ENCODE measurements at regions of chr4 and their contacts with region 1.

Region 1: GRCh38 chr4:112231779-112232713 is at the start of gene AP1AR:
- DNase-seq: peak; percentile 87
- ATAC-seq: peak; percentile 60
- H3K4me3 Mint-ChIP-seq: peak within 1 kb of the TSS; percentile 79
- H3K27ac Mint-ChIP-seq: peak within 1 kb of the TSS; percentile 91
- H3K4me1 Mint-ChIP-seq: peaks cover 28% of the 10 kb centered on the region
- H3K27me3 Mint-ChIP-seq: no peaks in the 10 kb centered on the region
- total RNA-seq, gene AP1AR: 15.8 to 16.5 TPM

Region 2: GRCh38 chr4:112099701-112100297 is 132.2 kb before region 1 on chr4:
- CTCF ChIA-PET with region 1: interaction called, 31 read pairs
- POLR2A ChIA-PET with region 1: no interaction called
- intact Hi-C with region 1: loop called (anchors 1 kb)
- DNase-seq: no peak
- ATAC-seq: peak; percentile 80
- H3K4me3 Mint-ChIP-seq: no peak overlapping the region
- H3K27ac Mint-ChIP-seq: no peak overlapping the region
- H3K4me1 Mint-ChIP-seq: no peaks in the 10 kb centered on the region
- H3K27me3 Mint-ChIP-seq: peaks cover 12% of the 10 kb centered on the region

Region 3: GRCh38 chr4:112145326-112145819 is 86.7 kb before region 1 on chr4 and contains the start of gene FAM241A:
- CTCF ChIA-PET with region 1: interaction called, 4 read pairs
- POLR2A ChIA-PET with region 1: interaction called, 5 read pairs
- intact Hi-C with region 1: loop called (anchors 1 kb)
- DNase-seq: peak; percentile 94
- ATAC-seq: peak; percentile 94
- H3K4me3 Mint-ChIP-seq: peak within 1 kb of the TSS; percentile 90
- H3K27ac Mint-ChIP-seq: peak within 1 kb of the TSS; percentile 90
- H3K4me1 Mint-ChIP-seq: peaks cover 39% of the 10 kb centered on the region
- H3K27me3 Mint-ChIP-seq: no peaks in the 10 kb centered on the region
- total RNA-seq, gene FAM241A: 3.2 to 3.5 TPM

Region 4: DNA sequence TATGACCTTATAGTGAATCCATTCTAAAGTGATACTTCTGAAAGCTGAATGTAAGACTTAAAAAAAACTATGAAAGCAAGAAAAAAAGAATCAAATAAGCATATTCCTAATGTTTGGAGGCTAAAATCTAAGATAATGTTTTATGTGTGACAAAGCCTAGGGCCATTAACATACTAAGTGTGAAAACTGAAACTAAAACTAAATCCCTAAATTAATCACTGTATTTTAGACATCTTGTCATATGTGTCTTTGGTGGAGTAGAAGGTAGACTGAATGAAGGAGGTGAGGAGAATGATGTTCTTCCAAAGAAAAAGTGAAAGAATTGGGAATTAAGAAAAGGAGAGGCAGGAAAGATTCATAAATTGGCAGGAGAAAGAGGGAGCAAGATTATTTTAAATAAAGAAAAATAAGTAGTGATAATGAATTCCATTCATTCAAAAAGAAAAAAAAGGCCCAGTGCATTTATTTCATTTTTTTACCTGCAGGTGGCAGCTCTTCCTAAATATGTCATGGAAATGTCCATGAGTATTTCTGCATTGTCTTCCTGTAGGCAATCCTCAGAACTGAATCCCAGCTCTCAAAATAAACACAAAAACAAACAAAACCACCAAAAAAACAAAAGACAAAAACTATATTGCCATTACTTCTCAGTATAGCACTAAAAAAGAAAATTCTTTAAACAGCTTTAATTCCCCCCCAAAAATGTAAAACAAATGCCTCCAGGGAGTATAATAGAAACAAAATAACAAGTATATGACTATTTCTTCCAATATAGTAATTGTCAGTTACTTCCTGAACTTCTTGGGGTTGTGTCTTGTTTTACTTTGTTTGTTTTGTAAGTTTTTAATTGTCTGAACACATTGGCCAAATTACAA is 17.4 kb before region 1 on chr4:
- CTCF ChIA-PET with region 1: interaction called, 15 read pairs
- POLR2A ChIA-PET with region 1: interaction called, 4 read pairs
- intact Hi-C with region 1: loop called in 1 of 2 experiments (anchors 2 kb)
- DNase-seq: no peak
- ATAC-seq: peak; percentile 61
- H3K4me3 Mint-ChIP-seq: no peak overlapping the region
- H3K27ac Mint-ChIP-seq: no peak overlapping the region
- H3K4me1 Mint-ChIP-seq: peaks cover 10% of the 10 kb centered on the region
- H3K27me3 Mint-ChIP-seq: no peaks in the 10 kb centered on the region

Region 5: DNA sequence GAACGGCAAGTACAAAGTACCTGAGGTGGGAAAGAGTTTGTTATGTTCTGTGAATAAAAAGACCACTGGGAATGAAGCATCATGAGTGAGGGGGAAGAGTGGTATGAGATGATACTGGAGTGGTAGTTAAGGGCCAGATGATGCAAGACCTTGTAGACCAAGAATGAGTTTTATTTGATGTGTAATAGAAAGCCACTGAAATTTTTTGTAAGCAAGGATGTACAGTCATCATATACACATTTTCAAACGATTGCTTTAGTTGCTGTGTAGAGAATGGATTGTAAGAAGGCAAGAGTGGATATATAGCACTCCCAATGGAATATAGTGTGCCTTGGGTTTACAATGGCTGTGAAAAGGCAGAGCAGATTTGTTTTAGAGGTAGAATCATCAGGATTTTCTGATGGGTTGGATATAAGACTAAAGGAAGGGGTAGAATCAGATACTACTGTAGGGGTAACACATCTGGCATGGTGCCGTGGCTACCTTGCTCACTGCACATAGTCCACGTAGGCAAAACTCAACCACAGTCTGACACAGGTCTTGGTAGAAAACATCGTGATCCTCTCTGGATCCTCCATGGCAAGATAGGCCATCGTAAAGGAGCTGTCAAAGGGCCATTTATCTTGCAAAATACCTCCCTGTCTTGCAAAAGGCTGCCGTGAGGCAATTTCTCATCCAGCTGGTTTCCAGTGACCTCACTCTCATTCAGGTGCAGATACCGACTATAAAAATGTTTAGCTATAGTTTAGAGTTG is 38.8 kb after region 1 on chr4:
- CTCF ChIA-PET with region 1: interaction called, 3 read pairs
- POLR2A ChIA-PET with region 1: interaction called, 3 read pairs
- intact Hi-C with region 1: loop called in 1 of 2 experiments (anchors 5 kb)
- DNase-seq: no peak
- ATAC-seq: peak; percentile 44
- H3K4me3 Mint-ChIP-seq: no peak overlapping the region
- H3K27ac Mint-ChIP-seq: peak overlapping the region; percentile 80
- H3K4me1 Mint-ChIP-seq: peaks cover 57% of the 10 kb centered on the region
- H3K27me3 Mint-ChIP-seq: no peaks in the 10 kb centered on the region

Region 6: DNA sequence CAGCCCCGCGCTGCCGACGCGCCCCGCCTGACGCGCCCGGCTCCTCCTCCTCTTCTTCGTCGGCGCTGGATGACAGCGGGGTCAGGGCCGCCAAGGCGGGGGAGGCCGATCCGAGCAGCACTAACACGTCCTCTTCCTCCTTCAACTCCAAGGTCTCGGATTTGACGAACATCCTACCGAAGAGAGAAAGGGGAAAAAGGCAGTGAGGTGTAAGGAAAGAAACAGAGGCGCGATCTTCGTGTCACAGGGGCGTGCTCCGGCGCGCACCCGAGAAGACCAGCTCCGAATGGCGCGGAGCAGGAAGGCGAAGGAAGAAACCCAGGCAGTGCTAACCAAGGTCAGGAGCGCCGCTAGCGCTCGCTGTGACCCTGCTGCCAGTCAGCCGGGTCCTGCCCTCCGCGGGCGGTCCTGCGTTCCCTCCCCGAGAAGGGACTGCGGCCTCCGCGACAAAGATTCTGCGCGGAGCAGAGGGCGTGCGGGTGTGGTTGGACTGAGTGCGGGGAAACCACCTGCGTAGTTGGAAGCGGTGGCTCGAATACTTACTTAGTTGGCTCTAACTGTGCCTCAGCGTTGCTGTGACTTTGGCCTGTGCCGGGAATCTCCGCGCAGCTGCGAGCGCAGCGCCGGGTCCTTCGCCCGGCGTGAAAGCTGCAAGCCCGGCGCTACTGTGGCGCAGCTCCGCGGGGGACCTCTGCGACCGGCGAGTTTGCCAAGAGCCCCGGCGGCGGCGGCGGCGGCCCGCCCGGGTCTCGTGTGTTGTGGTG is 283.4 kb after region 1 on chr4:
- CTCF ChIA-PET with region 1: no interaction called
- POLR2A ChIA-PET with region 1: no interaction called
- intact Hi-C with region 1: loop called (anchors 1 to 5 kb)
- DNase-seq: peak; percentile 76
- ATAC-seq: peak; percentile 68
- H3K4me3 Mint-ChIP-seq: peak overlapping the region; percentile 89
- H3K27ac Mint-ChIP-seq: peak overlapping the region; percentile 67
- H3K4me1 Mint-ChIP-seq: peaks cover 45% of the 10 kb centered on the region
- H3K27me3 Mint-ChIP-seq: peaks cover 80% of the 10 kb centered on the region

Region 7: GRCh38 chr4:112735474-112735951 is 503.5 kb after region 1 on chr4:
- CTCF ChIA-PET with region 1: no interaction called
- POLR2A ChIA-PET with region 1: no interaction called
- intact Hi-C with region 1: loop called in 1 of 2 experiments (anchors 10 kb)
- DNase-seq: peak; percentile 23
- ATAC-seq: peak; percentile 94
- H3K4me3 Mint-ChIP-seq: no peak overlapping the region
- H3K27ac Mint-ChIP-seq: peak overlapping the region; percentile 72
- H3K4me1 Mint-ChIP-seq: peaks cover 18% of the 10 kb centered on the region
- H3K27me3 Mint-ChIP-seq: no peaks in the 10 kb centered on the region